CD4-positive, alpha-beta memory T cell (primary cell): ENCODE measurements at regions of chr12 and their contacts with region 1.

Region 1: GRCh38 chr12:29519585-29520182 is 22.2 kb upstream of the OVCH1 start:
- DNase-seq: peak in 4 of 5 donors; percentile 11 to 30 (median 18)
- H3K4me3 ChIP-seq: no peak overlapping the region
- H3K4me3 Mint-ChIP-seq: no peak overlapping the region
- H3K27ac ChIP-seq: no peak overlapping the region
- H3K27ac Mint-ChIP-seq: no peak overlapping the region
- H3K4me1 ChIP-seq: no peaks in the 10 kb centered on the region
- H3K4me1 Mint-ChIP-seq: no peaks in the 10 kb centered on the region
- H3K27me3 ChIP-seq: no peaks in the 10 kb centered on the region
- H3K27me3 Mint-ChIP-seq: peaks cover 4 to 8% of the 10 kb centered on the region in 2 donors

Region 2: DNA sequence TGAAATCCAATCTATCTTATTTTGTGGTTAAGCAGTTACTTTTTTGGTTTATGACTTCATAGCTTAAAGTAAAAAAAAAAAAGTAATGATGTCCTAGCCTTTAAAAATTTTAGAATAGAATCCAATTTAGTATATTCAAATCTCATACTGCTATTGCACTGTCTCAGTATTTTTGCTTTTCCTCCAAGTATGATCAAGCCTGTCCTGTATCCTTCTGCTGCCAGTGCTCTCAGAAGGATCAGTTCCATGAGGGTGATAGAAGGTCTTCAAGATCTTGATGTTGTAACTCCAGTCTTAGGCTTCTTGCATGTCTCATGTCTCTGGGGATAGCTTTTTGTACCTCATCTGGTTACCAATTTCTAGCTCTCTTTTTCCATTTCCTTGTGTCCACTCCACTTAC is 694.8 kb before region 1 on chr12:
- CTCF ChIA-PET with region 1: no interaction called
- POLR2A ChIA-PET with region 1: no interaction called
- intact Hi-C with region 1: no loop called
- DNase-seq: no peak
- H3K4me3 ChIP-seq: no peak overlapping the region
- H3K4me3 Mint-ChIP-seq: no peak overlapping the region
- H3K27ac ChIP-seq: no peak overlapping the region
- H3K27ac Mint-ChIP-seq: no peak overlapping the region
- H3K4me1 ChIP-seq: no peaks in the 10 kb centered on the region
- H3K4me1 Mint-ChIP-seq: no peaks in the 10 kb centered on the region
- H3K27me3 ChIP-seq: no peaks in the 10 kb centered on the region
- H3K27me3 Mint-ChIP-seq: peaks cover 0 to 1% of the 10 kb centered on the region in 2 donors

Region 3: GRCh38 chr12:29073628-29074239 is 445.9 kb before region 1 on chr12:
- CTCF ChIA-PET with region 1: no interaction called
- POLR2A ChIA-PET with region 1: no interaction called
- intact Hi-C with region 1: loop called (anchors 1 kb)
- DNase-seq: peak; percentile 32 to 49 (median 37)
- H3K4me3 ChIP-seq: no peak overlapping the region
- H3K4me3 Mint-ChIP-seq: no peak overlapping the region
- H3K27ac ChIP-seq: no peak overlapping the region
- H3K27ac Mint-ChIP-seq: no peak overlapping the region
- H3K4me1 ChIP-seq: no peaks in the 10 kb centered on the region
- H3K4me1 Mint-ChIP-seq: peaks cover 0 to 2% (median 0%) of the 10 kb centered on the region in 4 donors
- H3K27me3 ChIP-seq: no peaks in the 10 kb centered on the region
- H3K27me3 Mint-ChIP-seq: peaks cover 13 to 18% of the 10 kb centered on the region in 2 donors

Region 4: DNA sequence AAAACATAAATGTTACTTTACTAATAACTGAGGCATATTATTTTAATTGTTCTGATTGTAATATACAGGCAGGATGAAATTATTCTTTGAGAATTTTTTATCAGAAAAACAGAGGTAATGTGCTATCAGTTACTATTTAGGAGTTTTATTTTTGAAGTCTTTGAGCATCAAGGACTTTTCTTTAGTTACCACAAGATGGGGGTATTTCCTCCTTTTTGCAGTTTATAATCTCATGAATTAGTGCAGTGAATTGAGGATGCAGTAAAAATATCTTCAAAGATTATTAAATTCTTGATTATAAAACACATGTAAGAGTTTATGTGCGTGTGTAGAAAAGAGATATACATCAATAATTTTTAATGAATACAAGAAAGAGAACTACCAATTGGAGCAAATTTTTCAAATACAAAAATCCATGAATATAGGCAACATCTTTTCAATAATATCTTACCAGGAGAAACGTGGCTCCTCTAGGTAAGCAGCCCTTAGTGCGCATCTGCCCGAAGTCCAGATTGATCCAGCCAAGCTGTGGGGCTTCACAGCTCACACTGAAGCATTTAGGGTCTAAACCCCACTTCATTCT is 210.3 kb before region 1 on chr12:
- CTCF ChIA-PET with region 1: no interaction called
- POLR2A ChIA-PET with region 1: no interaction called
- intact Hi-C with region 1: loop called (anchors 2 kb)
- DNase-seq: no peak
- H3K4me3 ChIP-seq: no peak overlapping the region
- H3K4me3 Mint-ChIP-seq: no peak overlapping the region
- H3K27ac ChIP-seq: no peak overlapping the region
- H3K27ac Mint-ChIP-seq: no peak overlapping the region
- H3K4me1 ChIP-seq: no peaks in the 10 kb centered on the region
- H3K4me1 Mint-ChIP-seq: no peaks in the 10 kb centered on the region
- H3K27me3 ChIP-seq: no peaks in the 10 kb centered on the region
- H3K27me3 Mint-ChIP-seq: no peaks in the 10 kb centered on the region

Region 5: GRCh38 chr12:29346769-29347421 is 172.8 kb before region 1 on chr12:
- CTCF ChIA-PET with region 1: no interaction called
- POLR2A ChIA-PET with region 1: no interaction called
- intact Hi-C with region 1: no loop called
- DNase-seq: no peak
- H3K4me3 ChIP-seq: no peak overlapping the region
- H3K4me3 Mint-ChIP-seq: no peak overlapping the region
- H3K27ac ChIP-seq: no peak overlapping the region
- H3K27ac Mint-ChIP-seq: peak overlapping the region in 1 of 7 donors; percentile 69
- H3K4me1 ChIP-seq: no peaks in the 10 kb centered on the region
- H3K4me1 Mint-ChIP-seq: no peaks in the 10 kb centered on the region
- H3K27me3 ChIP-seq: no peaks in the 10 kb centered on the region
- H3K27me3 Mint-ChIP-seq: no peaks in the 10 kb centered on the region

Region 6: DNA sequence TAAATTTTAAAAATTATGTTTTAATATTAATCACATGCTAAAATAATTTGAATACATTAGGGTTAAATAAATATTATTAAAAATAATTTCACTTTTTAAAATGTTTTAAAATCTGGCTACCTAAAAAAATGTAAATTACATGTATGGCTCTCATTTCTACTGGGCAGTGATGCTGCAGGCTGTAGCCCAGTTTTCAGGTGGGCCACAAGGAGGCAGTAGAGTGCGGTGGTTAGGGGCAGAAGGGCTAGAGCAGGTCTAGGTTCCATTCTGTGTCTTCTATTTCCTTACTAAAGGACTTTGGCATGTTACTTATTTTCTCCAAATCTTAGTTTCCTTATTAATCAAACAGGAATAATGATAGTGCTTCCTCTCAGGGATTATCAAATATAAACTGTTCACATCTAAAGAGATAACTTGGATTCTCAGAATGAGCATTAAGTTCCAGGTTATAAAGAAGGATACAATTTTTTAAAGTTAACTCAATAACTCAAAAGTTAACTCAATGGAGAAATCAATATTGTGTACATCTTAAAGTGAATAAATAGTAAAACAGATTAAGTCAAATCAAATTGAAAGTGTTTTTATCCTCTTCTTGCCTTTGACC is 32.7 kb after region 1 on chr12:
- CTCF ChIA-PET with region 1: interaction called, 13 read pairs
- POLR2A ChIA-PET with region 1: no interaction called
- intact Hi-C with region 1: no loop called
- DNase-seq: peak; percentile 41 to 51 (median 48)
- H3K4me3 ChIP-seq: no peak overlapping the region
- H3K4me3 Mint-ChIP-seq: no peak overlapping the region
- H3K27ac ChIP-seq: no peak overlapping the region
- H3K27ac Mint-ChIP-seq: no peak overlapping the region
- H3K4me1 ChIP-seq: no peaks in the 10 kb centered on the region
- H3K4me1 Mint-ChIP-seq: peaks cover 0 to 2% (median 0%) of the 10 kb centered on the region in 4 donors
- H3K27me3 ChIP-seq: no peaks in the 10 kb centered on the region
- H3K27me3 Mint-ChIP-seq: peaks cover 2 to 4% of the 10 kb centered on the region in 2 donors

Region 7: DNA sequence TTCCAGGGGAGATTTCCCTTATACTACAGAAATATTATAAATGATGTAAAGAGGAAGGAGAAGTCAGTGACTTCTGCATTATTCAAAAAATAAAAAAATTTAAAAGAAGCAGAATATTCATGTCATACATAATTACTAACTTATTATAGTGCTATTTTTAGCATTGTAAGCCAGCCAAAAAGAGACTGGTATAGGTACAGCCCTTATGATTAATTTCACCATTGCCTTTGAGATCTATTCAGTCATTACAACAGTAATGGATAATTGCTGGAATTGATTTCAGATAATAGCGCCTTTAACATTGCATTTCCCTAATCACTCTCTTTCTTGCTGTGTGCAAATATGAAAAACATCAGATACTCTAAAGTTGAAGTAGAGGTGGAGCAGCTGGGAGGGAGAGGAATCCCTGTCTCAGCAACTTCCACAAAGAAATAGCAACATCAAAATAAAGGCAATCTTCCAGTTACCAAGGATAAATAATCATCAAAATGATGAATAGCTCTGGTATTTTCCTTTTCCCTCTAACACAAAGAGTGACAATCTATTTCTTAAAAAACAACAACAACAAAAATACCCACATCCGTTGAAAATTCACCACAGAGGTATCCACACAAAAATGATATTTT is 49.6 kb after region 1 on chr12:
- CTCF ChIA-PET with region 1: no interaction called
- POLR2A ChIA-PET with region 1: no interaction called
- intact Hi-C with region 1: no loop called
- DNase-seq: no peak
- H3K4me3 ChIP-seq: no peak overlapping the region
- H3K4me3 Mint-ChIP-seq: no peak overlapping the region
- H3K27ac ChIP-seq: no peak overlapping the region
- H3K27ac Mint-ChIP-seq: no peak overlapping the region
- H3K4me1 ChIP-seq: no peaks in the 10 kb centered on the region
- H3K4me1 Mint-ChIP-seq: peaks cover 0 to under 1% (median 0%) of the 10 kb centered on the region in 4 donors
- H3K27me3 ChIP-seq: no peaks in the 10 kb centered on the region
- H3K27me3 Mint-ChIP-seq: peaks cover 4 to 9% of the 10 kb centered on the region in 2 donors

Region 8: GRCh38 chr12:30806989-30807694 is 1287.5 kb after region 1 on chr12:
- CTCF ChIA-PET with region 1: interaction called, 34 read pairs
- POLR2A ChIA-PET with region 1: no interaction called
- intact Hi-C with region 1: loop called (anchors 1 kb)
- DNase-seq: peak in 4 of 5 donors; percentile 44 to 55 (median 53)
- H3K4me3 ChIP-seq: no peak overlapping the region
- H3K4me3 Mint-ChIP-seq: no peak overlapping the region
- H3K27ac ChIP-seq: no peak overlapping the region
- H3K27ac Mint-ChIP-seq: no peak overlapping the region
- H3K4me1 ChIP-seq: no peaks in the 10 kb centered on the region
- H3K4me1 Mint-ChIP-seq: no peaks in the 10 kb centered on the region
- H3K27me3 ChIP-seq: no peaks in the 10 kb centered on the region
- H3K27me3 Mint-ChIP-seq: peaks cover 11 to 12% of the 10 kb centered on the region in 2 donors

Region 9: DNA sequence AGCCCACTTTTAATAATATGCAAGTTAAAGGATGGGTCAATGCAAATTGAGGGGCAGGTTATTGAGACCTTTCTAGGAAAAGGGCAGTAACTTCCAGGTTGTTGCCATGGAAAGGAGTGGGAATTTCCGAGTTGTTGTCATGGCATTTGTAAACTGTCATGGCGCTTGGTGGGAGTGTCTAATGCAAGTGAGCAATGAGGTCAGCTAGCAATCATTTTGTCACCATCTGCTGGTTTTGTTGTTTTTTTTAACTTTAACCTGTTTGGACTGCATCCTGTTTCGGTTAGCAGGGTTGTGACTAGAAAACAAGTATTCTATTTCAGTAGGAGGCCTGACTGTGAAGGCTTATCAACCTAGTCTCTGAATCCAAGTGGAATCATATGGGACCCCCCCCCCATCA is 1321.0 kb after region 1 on chr12:
- CTCF ChIA-PET with region 1: interaction called, 28 read pairs
- POLR2A ChIA-PET with region 1: no interaction called
- intact Hi-C with region 1: loop called (anchors 1 kb)
- DNase-seq: no peak
- H3K4me3 ChIP-seq: no peak overlapping the region
- H3K4me3 Mint-ChIP-seq: no peak overlapping the region
- H3K27ac ChIP-seq: no peak overlapping the region
- H3K27ac Mint-ChIP-seq: no peak overlapping the region
- H3K4me1 ChIP-seq: no peaks in the 10 kb centered on the region
- H3K4me1 Mint-ChIP-seq: peaks cover 0 to 4% (median 2%) of the 10 kb centered on the region in 4 donors
- H3K27me3 ChIP-seq: no peaks in the 10 kb centered on the region
- H3K27me3 Mint-ChIP-seq: peaks cover 12 to 17% of the 10 kb centered on the region in 2 donors